ENCODE measurements at regions of chr3 and their contacts with region 1.

Region 1: DNA sequence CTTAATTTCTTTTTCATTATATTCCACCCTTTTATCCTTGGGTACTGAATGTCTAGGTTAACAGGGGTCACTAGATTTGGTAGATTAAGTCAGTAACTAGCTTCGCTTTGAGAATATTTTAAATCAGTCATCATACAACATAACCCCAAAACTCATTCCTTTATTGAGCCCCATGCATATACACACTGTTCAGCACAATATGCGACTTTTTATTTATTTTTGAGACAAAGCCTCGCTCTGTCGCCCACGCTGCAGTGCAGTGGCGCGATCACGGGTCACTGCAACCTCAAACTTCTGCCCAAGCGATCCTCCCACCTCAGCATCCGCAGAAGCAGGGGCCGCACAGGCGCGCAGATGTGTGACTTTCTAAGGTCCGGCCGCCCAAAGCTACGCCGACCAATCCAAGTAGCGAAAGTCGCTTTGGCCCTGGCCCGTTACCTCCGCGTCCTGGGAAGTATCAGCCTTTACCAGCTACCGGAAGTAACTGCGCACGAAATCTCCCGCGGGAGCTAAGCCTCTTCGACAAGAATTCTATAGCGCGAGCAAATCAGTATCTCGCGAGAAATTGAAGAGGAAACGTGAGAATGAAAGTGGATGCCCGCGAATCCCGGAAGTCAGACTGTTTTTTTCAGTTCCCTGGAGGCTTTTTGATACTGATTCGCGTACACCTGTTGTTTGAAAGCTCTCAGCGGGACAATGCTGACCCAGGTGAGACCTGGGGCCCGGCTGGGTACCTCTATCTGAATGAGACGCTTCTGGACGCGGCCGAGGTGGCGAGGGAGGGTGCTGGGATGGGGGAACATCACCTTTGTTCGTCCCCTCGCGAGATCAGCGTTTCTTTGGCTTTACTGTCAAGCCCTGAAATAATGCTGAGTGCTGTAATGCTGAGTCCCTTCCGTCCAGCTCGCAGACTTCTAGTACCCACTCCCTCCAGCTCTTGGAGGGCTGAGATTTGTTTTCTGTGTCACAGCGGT is at the starts of genes DHFR2 and NSUN3:
- DNase-seq: peak; percentile 98
- ATAC-seq: peak; percentile 97
- H3K4me3 ChIP-seq: peak within 1 kb of the TSS; percentile 70
- H3K27ac ChIP-seq: peak within 1 kb of the TSS; percentile 91
- H3K4me1 ChIP-seq: peaks cover 1% of the 10 kb centered on the region; the same call in 1 of the 2 replicates
- H3K27me3 ChIP-seq: no peaks in the 10 kb centered on the region
- CTCF ChIP-seq: no peak
- POLR2A ChIP-seq: peak; percentile 79
- RAD21 ChIP-seq: no peak
- total RNA-seq, gene DHFR2: 2.3 and 3.9 TPM in 2 replicates
- total RNA-seq, gene NSUN3: 6.8 and 11.1 TPM in 2 replicates

Region 2: DNA sequence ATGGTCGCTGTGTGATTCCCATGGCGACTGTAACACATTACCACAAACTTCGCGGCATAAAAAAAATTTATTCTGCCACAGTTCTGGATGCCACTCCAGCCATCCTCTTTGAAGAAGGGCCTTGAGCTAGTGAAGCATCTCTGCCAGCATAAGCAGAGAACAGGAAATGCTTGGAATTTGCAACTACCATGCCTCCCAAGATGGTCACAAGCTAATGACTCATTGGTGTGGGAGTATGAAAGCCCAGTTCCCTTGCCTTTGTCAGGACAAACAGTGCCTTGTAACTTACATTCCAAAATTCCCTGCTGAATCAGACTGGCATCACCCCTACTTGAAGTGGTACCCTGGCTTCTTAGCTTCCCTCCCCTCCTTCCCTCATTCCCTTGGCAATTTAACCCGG is 218.7 kb before region 1 on chr3:
- CTCF ChIA-PET with region 1: no interaction called
- POLR2A ChIA-PET with region 1: no interaction called
- dilution Hi-C with region 1: no loop called
- in situ Hi-C with region 1: no loop called
- intact Hi-C with region 1: loop called (anchors 10 kb)
- DNase-seq: peak; percentile 76
- ATAC-seq: peak; percentile 81
- H3K4me3 ChIP-seq: no peak overlapping the region
- H3K27ac ChIP-seq: no peak overlapping the region
- H3K4me1 ChIP-seq: no peaks in the 10 kb centered on the region
- H3K27me3 ChIP-seq: no peaks in the 10 kb centered on the region
- CTCF ChIP-seq: no peak
- POLR2A ChIP-seq: no peak
- RAD21 ChIP-seq: no peak

Region 3: GRCh38 chr3:94162700-94163099 is 100.0 kb after region 1 on chr3:
- CTCF ChIA-PET with region 1: no interaction called
- POLR2A ChIA-PET with region 1: no interaction called
- dilution Hi-C with region 1: no loop called
- in situ Hi-C with region 1: no loop called
- intact Hi-C with region 1: no loop called
- DNase-seq: peak; percentile 34
- ATAC-seq: no peak
- H3K4me3 ChIP-seq: no peak overlapping the region
- H3K27ac ChIP-seq: no peak overlapping the region
- H3K4me1 ChIP-seq: no peaks in the 10 kb centered on the region
- H3K27me3 ChIP-seq: no peaks in the 10 kb centered on the region
- CTCF ChIP-seq: no peak
- POLR2A ChIP-seq: no peak
- RAD21 ChIP-seq: no peak

Measured in IMR-90 (cell line).